ENCODE measurements at regions of chr15 and their contacts with region 1.

Region 1: GRCh38 chr15:55108858-55109518 is 87.8 kb downstream of the RSL24D1 start:
- DNase-seq: peak; percentile 55
- H3K4me3 Mint-ChIP-seq: no peak overlapping the region
- H3K27ac Mint-ChIP-seq: no peak overlapping the region
- H3K4me1 Mint-ChIP-seq: peaks cover 4% of the 10 kb centered on the region
- H3K27me3 Mint-ChIP-seq: peaks cover under 1% of the 10 kb centered on the region
- CTCF ChIP-seq: peak; percentile 69

Region 2: GRCh38 chr15:53811530-53811929 is 1297.5 kb before region 1 on chr15:
- CTCF ChIA-PET with region 1: interaction called, 4 read pairs
- POLR2A ChIA-PET with region 1: no interaction called
- intact Hi-C with region 1: loop called (anchors 5 kb)
- DNase-seq: peak; percentile 34
- H3K4me3 Mint-ChIP-seq: no peak overlapping the region
- H3K27ac Mint-ChIP-seq: no peak overlapping the region
- H3K4me1 Mint-ChIP-seq: peaks cover 4% of the 10 kb centered on the region
- H3K27me3 Mint-ChIP-seq: peaks cover 70% of the 10 kb centered on the region
- CTCF ChIP-seq: peak; percentile 21

Region 3: DNA sequence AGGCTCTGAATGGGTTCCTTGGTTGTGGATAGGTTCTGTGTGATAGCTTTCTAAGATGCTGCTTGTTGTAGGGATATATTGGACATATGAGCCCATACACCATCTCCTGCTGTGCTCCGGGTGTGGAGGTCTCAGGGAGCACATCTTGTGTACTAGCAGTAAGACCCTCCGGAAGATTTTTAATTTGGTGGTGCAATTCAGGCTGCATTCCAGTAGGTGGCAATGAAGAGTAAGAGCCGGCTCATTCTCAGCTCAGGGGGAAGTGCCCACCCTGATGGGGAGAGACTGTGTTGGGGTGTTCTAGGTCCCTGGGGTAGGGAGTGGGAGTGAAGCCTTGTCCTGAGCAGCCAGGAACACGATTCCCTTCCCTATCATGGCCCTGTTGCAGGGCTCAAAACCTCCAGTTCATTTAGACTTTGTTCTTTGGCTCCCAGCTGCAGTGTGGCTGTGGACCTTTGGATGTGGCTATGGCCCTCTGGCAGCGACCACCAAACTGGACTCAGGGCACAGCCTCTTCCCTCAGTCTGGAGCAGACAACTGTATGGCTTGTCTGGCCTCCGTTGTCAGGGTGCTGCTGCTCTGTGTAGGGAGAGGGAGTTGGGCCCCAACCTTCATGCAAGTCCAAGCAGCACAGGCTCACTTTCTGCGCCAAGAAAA is 1026.0 kb before region 1 on chr15:
- CTCF ChIA-PET with region 1: no interaction called
- POLR2A ChIA-PET with region 1: no interaction called
- intact Hi-C with region 1: loop called (anchors 5 kb)
- DNase-seq: peak; percentile 25
- H3K4me3 Mint-ChIP-seq: no peak overlapping the region
- H3K27ac Mint-ChIP-seq: no peak overlapping the region
- H3K4me1 Mint-ChIP-seq: no peaks in the 10 kb centered on the region
- H3K27me3 Mint-ChIP-seq: peaks cover 55% of the 10 kb centered on the region
- CTCF ChIP-seq: peak; percentile 65

Measured in MCF 10A (cell line).